GM12878 (cell line): ENCODE measurements at regions of chr5 and their contacts with region 1.

Region 1: DNA sequence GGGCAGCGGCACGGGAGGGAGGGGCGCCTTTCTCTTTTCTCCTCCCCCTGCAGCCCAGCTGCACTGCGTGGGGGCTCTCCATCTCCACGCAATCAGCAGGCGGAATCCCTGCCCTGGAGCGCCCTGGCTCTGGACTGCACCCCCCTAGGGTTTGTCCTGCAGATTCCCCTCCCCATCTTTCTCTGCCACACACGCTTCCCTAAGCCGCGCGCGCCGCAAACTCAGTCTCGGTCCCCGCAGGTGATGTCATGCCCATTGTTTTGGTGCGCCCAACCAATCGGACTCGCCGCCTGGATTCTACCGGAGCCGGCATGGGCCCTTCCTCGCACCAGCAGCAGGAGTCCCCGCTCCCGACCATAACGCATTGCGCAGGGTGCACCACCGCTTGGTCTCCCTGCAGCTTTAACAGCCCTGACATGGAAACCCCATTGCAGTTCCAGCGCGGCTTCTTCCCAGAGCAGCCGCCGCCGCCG is at the start of gene KCNN2:
- DNase-seq: peak; percentile 26
- ATAC-seq: peak; percentile 75
- H3K4me3 ChIP-seq: peak within 1 kb of the TSS; percentile 44; the same call in 1 of the 2 replicates
- H3K27ac ChIP-seq: no peak within 1 kb of the TSS
- H3K4me1 ChIP-seq: no peaks in the 10 kb centered on the region
- H3K27me3 ChIP-seq: peaks cover 0 to 18% of the 10 kb centered on the region in 2 experiments; a peak in 2 of 4 replicates
- CTCF ChIP-seq: no peak
- EP300 ChIP-seq: no peak
- POLR2A ChIP-seq: no peak
- RAD21 ChIP-seq: no peak
- polyA plus RNA-seq, gene KCNN2: 0.47 to 0.60 TPM

Region 2: DNA sequence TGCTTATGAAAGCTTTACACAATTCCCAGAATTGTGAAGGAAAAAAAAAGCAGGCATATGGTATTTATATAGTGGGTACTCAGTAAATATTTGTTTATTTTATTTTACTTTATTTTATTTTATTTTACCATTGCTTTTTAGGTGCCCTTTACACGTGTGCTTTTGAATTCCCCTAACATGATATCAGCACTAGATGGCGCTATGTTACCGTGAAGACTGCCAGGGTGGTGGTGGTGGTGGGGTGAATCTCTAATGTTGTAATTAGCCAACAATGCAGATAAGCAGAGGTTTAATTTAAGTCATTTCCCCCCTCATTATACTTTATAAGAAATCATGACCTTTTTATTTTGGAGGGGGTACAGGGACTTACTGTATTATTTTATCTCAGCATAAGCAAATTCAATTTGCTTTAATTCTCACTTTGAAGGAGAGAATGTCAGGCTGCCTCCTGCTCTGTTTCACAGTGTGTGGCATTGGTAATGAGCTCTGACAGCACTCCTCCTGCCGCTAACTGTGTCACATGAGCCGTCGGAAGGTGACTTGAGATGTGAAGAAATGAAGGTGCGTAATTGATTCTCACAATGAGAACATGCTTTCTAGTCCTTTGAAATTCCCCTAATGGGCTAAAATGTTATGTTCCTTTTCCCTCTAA is 682.7 kb before region 1 on chr5:
- CTCF ChIA-PET with region 1: interaction called, 7 read pairs
- POLR2A ChIA-PET with region 1: no interaction called
- RAD21 ChIA-PET with region 1: interaction called, 10 read pairs
- SMC1A ChIA-PET with region 1: interaction called, 7 read pairs
- in situ Hi-C with region 1: no loop called
- intact Hi-C with region 1: loop called (anchors 5 kb)
- DNase-seq: peak; percentile 8
- ATAC-seq: peak; percentile 96
- H3K4me3 ChIP-seq: no peak overlapping the region
- H3K27ac ChIP-seq: no peak overlapping the region
- H3K4me1 ChIP-seq: no peaks in the 10 kb centered on the region
- H3K27me3 ChIP-seq: no peaks in the 10 kb centered on the region
- CTCF ChIP-seq: peak; percentile 66 to 83 (median 68)
- EP300 ChIP-seq: no peak
- POLR2A ChIP-seq: no peak
- RAD21 ChIP-seq: peak; percentile 97

Region 3: GRCh38 chr5:114255260-114255659 is 106.5 kb before region 1 on chr5:
- CTCF ChIA-PET with region 1: no interaction called
- POLR2A ChIA-PET with region 1: no interaction called
- RAD21 ChIA-PET with region 1: no interaction called
- SMC1A ChIA-PET with region 1: no interaction called
- in situ Hi-C with region 1: no loop called
- intact Hi-C with region 1: no loop called
- DNase-seq: no peak
- ATAC-seq: no peak
- H3K4me3 ChIP-seq: no peak overlapping the region
- H3K27ac ChIP-seq: no peak overlapping the region
- H3K4me1 ChIP-seq: no peaks in the 10 kb centered on the region
- H3K27me3 ChIP-seq: no peaks in the 10 kb centered on the region
- CTCF ChIP-seq: no peak
- EP300 ChIP-seq: no peak
- POLR2A ChIP-seq: no peak
- RAD21 ChIP-seq: no peak

Region 4: DNA sequence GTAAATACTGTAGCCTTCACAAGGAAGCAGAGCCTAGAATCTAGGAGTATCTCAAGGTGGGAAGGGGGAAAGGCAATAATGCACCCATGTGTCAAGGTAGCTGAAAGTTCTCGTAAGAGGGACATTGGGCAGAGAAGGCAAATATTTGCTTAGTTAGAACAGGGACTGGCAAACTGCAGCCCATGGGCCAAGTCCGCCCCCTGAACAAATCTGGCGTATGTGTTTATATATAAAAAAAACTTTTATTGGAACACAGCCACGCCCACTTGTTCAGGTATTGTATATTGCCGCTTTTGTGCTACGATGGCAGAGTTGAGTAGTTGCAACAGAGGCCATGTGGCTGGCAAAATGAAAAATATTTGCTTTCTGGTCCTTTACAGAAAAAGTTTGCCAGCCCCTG is 16.2 kb after region 1 on chr5:
- CTCF ChIA-PET with region 1: interaction called, 13 read pairs
- POLR2A ChIA-PET with region 1: interaction called, 5 read pairs
- RAD21 ChIA-PET with region 1: interaction called, 17 read pairs
- SMC1A ChIA-PET with region 1: interaction called, 23 read pairs
- in situ Hi-C with region 1: no loop called
- intact Hi-C with region 1: no loop called
- DNase-seq: no peak
- ATAC-seq: no peak
- H3K4me3 ChIP-seq: no peak overlapping the region
- H3K27ac ChIP-seq: no peak overlapping the region
- H3K4me1 ChIP-seq: no peaks in the 10 kb centered on the region
- H3K27me3 ChIP-seq: no peaks in the 10 kb centered on the region
- CTCF ChIP-seq: no peak
- EP300 ChIP-seq: no peak
- POLR2A ChIP-seq: no peak
- RAD21 ChIP-seq: no peak

Region 5: DNA sequence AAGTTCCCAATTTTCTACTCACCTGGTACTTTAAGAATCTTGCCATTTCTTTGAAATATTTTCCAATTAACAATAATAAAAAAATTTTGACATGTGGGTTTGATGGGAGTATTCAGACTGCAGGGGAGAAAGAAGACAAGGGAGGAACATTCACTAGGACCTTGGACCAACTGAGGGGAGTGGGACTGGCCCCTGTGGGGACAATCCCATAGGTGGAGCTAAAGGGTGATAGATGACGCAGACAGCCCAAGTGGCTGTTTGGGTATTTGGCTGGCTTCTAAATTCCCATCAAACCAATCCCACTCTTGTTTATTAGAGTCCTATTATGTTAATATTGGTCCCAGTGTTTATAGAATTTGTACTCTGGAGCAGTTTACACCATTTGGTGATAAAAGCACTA is 65.4 kb after region 1 on chr5:
- CTCF ChIA-PET with region 1: interaction called, 6 read pairs
- POLR2A ChIA-PET with region 1: interaction called, 4 read pairs
- RAD21 ChIA-PET with region 1: interaction called, 8 read pairs
- SMC1A ChIA-PET with region 1: interaction called, 142 read pairs
- in situ Hi-C with region 1: no loop called
- intact Hi-C with region 1: no loop called
- DNase-seq: no peak
- ATAC-seq: no peak
- H3K4me3 ChIP-seq: no peak overlapping the region
- H3K27ac ChIP-seq: no peak overlapping the region
- H3K4me1 ChIP-seq: no peaks in the 10 kb centered on the region; the same call in 1 of the 2 replicates
- H3K27me3 ChIP-seq: no peaks in the 10 kb centered on the region
- CTCF ChIP-seq: no peak
- EP300 ChIP-seq: no peak
- POLR2A ChIP-seq: no peak
- RAD21 ChIP-seq: no peak

Region 6: GRCh38 chr5:114789773-114790402 is 428.1 kb after region 1 on chr5:
- CTCF ChIA-PET with region 1: interaction called, 7 read pairs
- POLR2A ChIA-PET with region 1: no interaction called
- RAD21 ChIA-PET with region 1: no interaction called
- SMC1A ChIA-PET with region 1: interaction called, 3 read pairs
- in situ Hi-C with region 1: loop called (anchors 25 kb)
- intact Hi-C with region 1: loop called (anchors 2 kb)
- DNase-seq: no peak
- ATAC-seq: peak; percentile 83
- H3K4me3 ChIP-seq: no peak overlapping the region
- H3K27ac ChIP-seq: no peak overlapping the region
- H3K4me1 ChIP-seq: no peaks in the 10 kb centered on the region
- H3K27me3 ChIP-seq: no peaks in the 10 kb centered on the region; a peak in 1 of 4 replicates
- CTCF ChIP-seq: peak; percentile 28 to 64 (median 53); a peak in 5 of 6 replicates
- EP300 ChIP-seq: no peak
- POLR2A ChIP-seq: no peak
- RAD21 ChIP-seq: peak; percentile 60